ENCODE measurements at regions of chrX and their contacts with region 1.

Region 1: GRCh38 chrX:138128027-138128671 is 562.2 kb downstream of the ZIC3 start:
- DNase-seq: peak; percentile 19
- CTCF ChIP-seq: peak; percentile 58

Region 2: GRCh38 chrX:138745196-138745595 is 617.0 kb after region 1 on chrX:
- CTCF ChIA-PET with region 1: interaction called, 19 read pairs
- POLR2A ChIA-PET with region 1: no interaction called
- DNase-seq: peak; percentile 13
- CTCF ChIP-seq: peak; percentile 41

Measured in GM10248 (cell line).